Common myeloid progenitor, CD34-positive (primary cell): ENCODE measurements at regions of chr5 and their contacts with region 1.

Region 1: DNA sequence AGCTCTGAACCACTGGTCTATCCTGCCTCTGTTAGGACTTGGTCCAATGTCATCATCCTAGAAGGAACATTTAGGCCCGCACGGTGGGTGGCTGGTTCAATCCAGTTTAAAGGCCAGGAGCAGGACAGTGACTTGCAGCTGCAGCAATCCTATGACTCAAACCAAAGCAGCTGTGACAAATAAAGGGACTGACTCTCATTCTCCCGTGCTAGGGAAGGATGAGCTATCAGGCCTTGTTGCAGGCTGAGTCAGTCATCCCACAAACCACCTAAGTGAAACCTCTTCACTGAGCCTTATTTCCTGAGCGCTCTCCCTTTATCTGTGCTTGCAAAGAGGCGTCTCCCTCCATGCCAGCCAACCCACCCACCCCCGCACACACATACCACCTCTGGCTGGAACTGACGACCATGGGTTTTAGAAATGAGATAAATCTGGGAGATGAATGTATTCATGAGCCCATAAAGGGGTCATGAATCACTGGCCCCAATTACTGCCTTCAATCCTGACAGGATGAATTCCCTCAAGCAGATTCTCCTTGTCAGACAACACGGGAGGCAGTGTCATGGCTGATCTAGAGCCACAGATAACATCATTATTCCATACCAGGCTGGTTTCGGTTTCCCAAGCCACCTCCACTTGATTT is 93.4 kb downstream of the KCNIP1 start:
- DNase-seq: no peak
- H3K4me3 ChIP-seq: no peak overlapping the region
- H3K27ac ChIP-seq: no peak overlapping the region
- H3K4me1 ChIP-seq: peaks cover 0 to 21% (median 8%) of the 10 kb centered on the region in 4 experiments
- H3K27me3 ChIP-seq: peaks cover 0 to 15% (median 0%) of the 10 kb centered on the region in 5 experiments

Region 2: DNA sequence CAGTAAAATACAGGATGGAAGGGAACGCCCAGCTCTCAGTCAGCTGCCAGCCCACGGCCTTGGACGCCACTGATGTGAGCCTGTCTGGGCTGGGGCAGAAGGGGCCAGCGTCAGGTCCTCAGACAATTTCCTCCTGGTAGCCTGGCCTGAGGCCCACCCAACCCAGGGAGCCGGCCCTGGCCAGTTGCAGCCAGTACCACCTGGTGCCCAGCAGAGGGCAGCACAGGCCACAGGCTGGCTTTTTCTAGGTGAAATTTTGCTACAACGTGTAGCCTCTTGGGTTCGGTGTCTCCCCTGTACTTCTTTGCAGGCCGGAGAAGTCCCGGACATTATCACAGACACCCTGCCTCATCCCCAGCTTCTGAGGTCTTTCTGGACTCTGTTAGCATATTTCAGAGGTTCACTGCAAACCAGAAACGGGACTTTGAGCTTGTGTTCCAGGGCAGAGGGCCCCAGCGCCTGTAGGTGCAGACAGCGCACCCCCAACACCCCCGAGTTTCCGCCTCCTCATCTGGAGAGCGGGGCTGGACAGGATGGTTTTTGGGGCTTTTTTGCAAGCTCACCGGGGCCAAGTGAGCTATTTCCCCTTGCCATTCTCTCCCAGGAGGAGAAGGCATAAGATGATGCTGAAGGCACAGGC is 162.1 kb before region 1 on chr5:
- CTCF ChIA-PET with region 1: interaction called, 39 read pairs
- POLR2A ChIA-PET with region 1: no interaction called
- DNase-seq: peak; percentile 54 to 76 (median 66)
- H3K4me3 ChIP-seq: no peak overlapping the region
- H3K27ac ChIP-seq: no peak overlapping the region
- H3K4me1 ChIP-seq: peaks cover 0 to 3% (median 0%) of the 10 kb centered on the region in 4 experiments
- H3K27me3 ChIP-seq: peaks cover 0 to 6% (median 0%) of the 10 kb centered on the region in 5 experiments